ENCODE measurements at regions of chr5 and their contacts with region 1.

Region 1: GRCh38 chr5:132426525-132427138 is 57.1 kb downstream of the SLC22A5 start:
- DNase-seq: peak; percentile 70
- H3K4me3 Mint-ChIP-seq: peak overlapping the region; percentile 66
- H3K27ac Mint-ChIP-seq: peak overlapping the region; percentile 98
- H3K4me1 Mint-ChIP-seq: peaks cover 98% of the 10 kb centered on the region
- H3K27me3 Mint-ChIP-seq: no peaks in the 10 kb centered on the region

Region 2: DNA sequence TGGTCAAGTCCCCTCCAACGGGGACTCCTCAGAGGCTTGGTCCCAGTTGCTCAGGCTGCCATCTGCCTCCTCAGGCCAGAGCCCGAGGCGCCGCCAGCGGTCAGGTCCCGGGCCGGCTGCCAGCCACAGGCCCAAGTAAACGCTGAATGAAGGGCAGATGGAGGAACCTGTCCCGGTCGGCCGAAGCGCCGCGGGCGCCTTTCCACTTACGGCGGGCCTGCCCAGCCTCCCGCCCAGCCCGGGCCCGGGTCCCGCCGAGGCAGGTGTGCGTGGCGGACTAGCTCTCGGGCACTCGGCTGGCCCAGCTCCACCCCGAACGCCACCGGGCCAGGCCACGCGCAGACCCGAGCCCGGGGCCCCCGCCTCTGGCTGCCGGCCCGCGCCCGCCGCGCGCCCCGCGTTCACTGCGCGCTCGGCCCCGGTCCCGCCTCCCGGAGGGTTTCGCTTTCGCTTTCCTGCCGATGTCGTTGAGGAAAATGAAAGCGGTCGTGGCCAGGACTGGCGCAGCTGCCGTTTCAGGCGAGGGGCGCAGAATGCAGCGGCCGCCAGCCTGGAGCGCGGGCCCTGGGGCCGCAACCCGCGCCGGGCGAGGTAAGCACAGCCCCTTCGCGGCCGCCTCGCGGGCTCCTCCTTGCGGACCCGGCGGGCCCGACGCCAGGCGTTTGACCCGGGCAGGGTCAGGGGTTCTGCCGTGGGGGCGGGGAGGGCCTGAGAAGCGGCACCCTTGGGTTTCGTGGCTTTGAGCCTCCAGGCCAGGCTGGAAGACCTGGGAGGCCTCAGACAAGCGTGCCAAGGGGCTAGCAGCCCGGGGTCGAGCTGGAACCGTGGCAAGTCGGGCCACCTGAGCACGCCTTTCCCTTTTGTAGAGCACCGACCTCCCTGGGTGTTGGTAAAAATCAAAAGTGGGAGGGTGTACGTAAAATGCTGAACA is 15.9 kb before region 1 on chr5:
- CTCF ChIA-PET with region 1: interaction called, 22 read pairs
- POLR2A ChIA-PET with region 1: interaction called, 4 read pairs
- DNase-seq: peak; percentile 92
- H3K4me3 Mint-ChIP-seq: peak overlapping the region; percentile 98
- H3K27ac Mint-ChIP-seq: peak overlapping the region; percentile 99
- H3K4me1 Mint-ChIP-seq: peaks cover 67% of the 10 kb centered on the region
- H3K27me3 Mint-ChIP-seq: no peaks in the 10 kb centered on the region

Region 3: DNA sequence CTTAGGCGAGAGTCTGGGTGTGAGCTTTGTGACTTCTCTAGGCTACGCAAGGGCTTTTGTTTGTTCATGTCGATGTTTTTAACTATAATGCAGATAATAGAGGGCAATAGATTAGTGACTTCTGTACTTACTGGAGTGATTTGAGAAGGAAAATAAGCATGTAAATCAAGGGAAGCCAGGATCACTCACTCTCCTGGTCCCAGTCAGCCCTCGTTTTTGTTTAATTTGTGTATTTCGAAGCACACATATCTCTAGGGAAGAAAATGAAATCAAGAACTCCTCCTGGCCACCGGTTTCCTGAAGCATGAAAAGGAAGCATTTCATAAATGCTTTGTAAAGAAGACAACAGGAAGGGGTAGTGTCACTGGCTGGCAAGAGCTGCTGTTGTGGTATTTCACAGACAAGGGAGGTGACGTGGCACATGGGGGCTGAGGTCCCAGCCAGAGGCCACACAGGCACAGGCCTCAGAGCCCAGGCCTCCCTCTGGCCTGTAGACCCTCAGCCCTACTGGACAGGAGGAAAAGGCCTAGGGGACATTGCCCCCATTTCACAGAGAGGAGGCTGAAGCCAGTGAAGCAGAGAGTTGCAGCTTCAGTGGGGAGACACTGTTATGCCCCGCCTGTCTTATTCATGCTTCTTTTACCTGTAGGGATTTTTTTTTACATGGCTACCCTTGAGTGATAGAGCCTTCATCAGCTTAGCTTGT is 29.8 kb after region 1 on chr5:
- CTCF ChIA-PET with region 1: interaction called, 13 read pairs
- POLR2A ChIA-PET with region 1: interaction called, 5 read pairs
- DNase-seq: peak; percentile 82
- H3K4me3 Mint-ChIP-seq: peak overlapping the region; percentile 51
- H3K27ac Mint-ChIP-seq: peak overlapping the region; percentile 99
- H3K4me1 Mint-ChIP-seq: peaks cover 92% of the 10 kb centered on the region
- H3K27me3 Mint-ChIP-seq: no peaks in the 10 kb centered on the region

Region 4: DNA sequence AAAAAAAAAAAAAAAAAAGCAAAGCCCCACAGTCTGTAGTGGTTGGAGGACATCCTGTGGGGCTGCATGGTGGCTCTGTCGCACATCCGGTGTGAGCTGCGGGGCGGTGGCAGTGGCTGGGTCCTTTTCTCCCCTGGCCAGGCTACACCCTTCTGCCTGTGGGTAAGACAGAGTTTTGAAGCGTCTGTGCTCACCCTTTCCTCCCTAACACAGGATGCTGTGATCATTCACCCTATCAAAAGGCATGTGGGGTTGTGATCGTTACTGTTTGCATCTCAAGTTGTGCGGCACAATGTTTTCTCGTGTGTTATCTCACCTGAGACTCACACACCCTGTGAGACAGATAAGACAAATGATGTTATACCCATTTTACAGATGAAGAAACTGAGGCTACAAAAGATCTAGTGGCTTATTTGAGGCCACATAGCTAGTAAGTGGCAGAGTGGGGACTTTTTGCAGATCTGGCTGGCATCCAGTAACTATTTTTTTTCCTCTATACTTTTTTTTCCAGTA is 46.4 kb after region 1 on chr5:
- CTCF ChIA-PET with region 1: interaction called, 62 read pairs
- POLR2A ChIA-PET with region 1: interaction called, 3 read pairs
- DNase-seq: peak; percentile 92
- H3K4me3 Mint-ChIP-seq: peak overlapping the region; percentile 31
- H3K27ac Mint-ChIP-seq: peak overlapping the region; percentile 92
- H3K4me1 Mint-ChIP-seq: peaks cover 87% of the 10 kb centered on the region
- H3K27me3 Mint-ChIP-seq: no peaks in the 10 kb centered on the region

Region 5: DNA sequence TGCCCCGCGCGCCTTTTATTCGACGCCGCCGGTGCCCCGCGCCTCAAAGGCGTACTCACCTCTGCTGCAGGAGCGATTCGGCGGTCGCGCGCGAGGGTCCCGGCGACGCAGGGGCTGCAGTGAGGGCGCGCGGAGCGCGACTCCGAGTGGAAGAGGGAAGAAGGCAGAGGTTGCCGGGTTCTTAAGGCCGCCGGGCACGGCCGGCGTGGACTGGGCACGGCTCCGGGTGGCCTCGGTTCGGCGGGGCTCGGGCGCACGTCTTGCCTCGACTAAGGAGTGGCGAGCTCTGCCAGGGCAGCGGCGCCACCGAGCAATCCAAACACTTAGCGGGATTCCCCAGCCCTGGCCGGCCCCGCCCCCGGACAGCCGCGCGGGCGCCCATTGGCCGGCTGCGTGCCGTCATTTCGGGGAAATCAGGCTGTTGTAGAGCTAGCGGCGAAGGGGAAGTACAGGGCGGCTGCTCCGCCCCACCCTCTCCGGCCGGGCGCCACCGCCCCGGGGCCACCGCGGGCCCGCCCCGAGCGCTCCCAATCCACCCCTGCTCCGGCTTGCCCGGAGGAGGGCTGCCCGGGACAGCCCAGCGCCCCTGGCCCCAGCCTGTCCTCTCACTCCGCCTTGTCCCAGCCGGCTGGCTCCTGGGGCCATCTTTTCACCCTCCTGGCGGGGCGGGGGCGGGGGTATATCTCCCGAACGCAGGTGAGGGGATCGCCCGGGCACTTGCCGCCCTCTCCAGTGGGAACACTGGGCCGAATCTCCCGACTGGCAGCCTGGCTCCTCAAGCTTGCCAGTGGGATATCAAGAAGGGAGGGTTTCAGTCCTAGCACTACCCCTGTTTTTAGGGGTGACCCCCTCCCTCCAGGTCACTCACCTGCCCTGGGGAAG is 64.1 kb after region 1 on chr5 and contains the start of gene IRF1:
- CTCF ChIA-PET with region 1: interaction called, 32 read pairs
- POLR2A ChIA-PET with region 1: interaction called, 21 read pairs
- DNase-seq: peak; percentile 98
- H3K4me3 Mint-ChIP-seq: peak within 1 kb of the TSS; percentile 99
- H3K27ac Mint-ChIP-seq: peak within 1 kb of the TSS; percentile 96
- H3K4me1 Mint-ChIP-seq: peaks cover 70% of the 10 kb centered on the region
- H3K27me3 Mint-ChIP-seq: no peaks in the 10 kb centered on the region
- total RNA-seq, gene IRF1: 289 to 302 TPM

Region 6: GRCh38 chr5:132591145-132591544 is 164.5 kb after region 1 on chr5:
- CTCF ChIA-PET with region 1: no interaction called
- POLR2A ChIA-PET with region 1: no interaction called
- DNase-seq: no peak
- H3K4me3 Mint-ChIP-seq: no peak overlapping the region
- H3K27ac Mint-ChIP-seq: no peak overlapping the region
- H3K4me1 Mint-ChIP-seq: no peaks in the 10 kb centered on the region
- H3K27me3 Mint-ChIP-seq: no peaks in the 10 kb centered on the region